ENCODE measurements at regions of chr22 and their contacts with region 1.

Region 1: DNA sequence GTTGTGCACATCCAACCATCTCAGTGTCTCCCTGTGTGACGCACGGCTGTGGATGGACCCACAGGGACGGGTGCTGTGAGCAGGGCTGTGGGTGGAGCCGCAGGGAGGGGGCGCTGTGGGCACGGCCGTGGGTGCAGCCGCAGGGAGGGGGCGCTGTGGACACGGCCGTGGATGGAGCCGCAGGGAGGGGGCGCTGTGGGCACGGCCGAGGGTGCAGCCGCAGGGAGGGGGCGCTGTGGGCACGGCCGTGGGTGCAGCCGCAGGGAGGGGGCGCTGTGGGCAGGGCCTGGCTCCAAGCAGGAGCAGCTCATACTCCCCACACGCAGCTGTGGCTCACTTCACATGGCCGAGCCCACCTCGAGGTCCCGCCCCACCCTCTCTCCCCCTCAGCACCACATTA is 6.0 kb upstream of the MAPK11 start:
- DNase-seq: peak in 7 of 14 experiments; percentile 11 to 84 (median 58)
- ATAC-seq: peak; percentile 73
- H3K4me3 ChIP-seq: no peak overlapping the region
- H3K4me3 Mint-ChIP-seq: no peak overlapping the region
- H3K27ac ChIP-seq: no peak overlapping the region
- H3K27ac Mint-ChIP-seq: no peak overlapping the region
- H3K4me1 ChIP-seq: peaks cover 15% of the 10 kb centered on the region
- H3K4me1 Mint-ChIP-seq: peaks cover 7% of the 10 kb centered on the region
- H3K27me3 ChIP-seq: no peaks in the 10 kb centered on the region
- H3K27me3 Mint-ChIP-seq: no peaks in the 10 kb centered on the region
- CTCF ChIP-seq: no peak

Region 2: DNA sequence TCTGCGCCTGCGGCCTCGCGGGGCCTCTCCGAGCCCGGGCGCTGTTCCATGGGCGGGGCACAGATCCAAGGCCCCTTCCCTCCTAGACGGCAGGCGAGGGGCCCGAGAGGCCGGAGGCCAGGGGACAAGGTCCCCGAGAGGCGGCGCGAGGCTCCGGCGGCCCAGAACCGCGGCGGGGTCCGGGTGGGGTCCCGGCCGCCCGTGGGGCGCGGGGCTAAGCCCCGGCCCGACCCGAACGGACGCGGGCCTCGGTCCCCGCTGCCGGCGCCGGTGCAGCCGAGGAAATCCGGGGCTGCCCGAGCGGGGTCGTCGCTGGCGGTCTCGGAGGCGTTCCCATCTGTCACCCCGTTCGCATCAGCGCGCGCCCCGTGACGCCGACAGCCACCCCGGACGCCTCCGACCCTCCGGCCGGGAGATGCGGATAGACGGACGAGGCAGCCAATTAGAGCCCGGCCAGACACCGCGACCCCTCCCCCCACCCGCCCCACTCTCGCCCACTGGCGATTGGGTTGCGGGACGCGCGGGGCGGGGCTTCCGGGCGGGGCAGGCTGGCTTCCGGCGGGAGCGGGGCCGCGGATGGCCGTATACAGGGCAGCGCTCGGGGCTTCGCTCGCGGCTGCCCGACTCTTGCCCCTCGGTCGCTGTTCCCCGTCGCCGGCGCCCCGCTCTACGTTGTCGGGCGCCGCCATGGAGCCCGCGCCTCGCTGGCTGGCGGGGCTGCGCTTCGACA is 75.5 kb before region 1 on chr22 and contains the start of gene SELENOO:
- CTCF ChIA-PET with region 1: no interaction called
- POLR2A ChIA-PET with region 1: no interaction called
- intact Hi-C with region 1: no loop called
- DNase-seq: peak; percentile 76 to 96 (median 90)
- ATAC-seq: peak; percentile 80
- H3K4me3 ChIP-seq: peak within 1 kb of the TSS; percentile 60
- H3K4me3 Mint-ChIP-seq: peak within 1 kb of the TSS; percentile 91
- H3K27ac ChIP-seq: peak within 1 kb of the TSS in 1 of 2 donors; percentile 40
- H3K27ac Mint-ChIP-seq: peak within 1 kb of the TSS; percentile 85
- H3K4me1 ChIP-seq: peaks cover 27% of the 10 kb centered on the region
- H3K4me1 Mint-ChIP-seq: peaks cover 27% of the 10 kb centered on the region
- H3K27me3 ChIP-seq: no peaks in the 10 kb centered on the region
- H3K27me3 Mint-ChIP-seq: no peaks in the 10 kb centered on the region
- CTCF ChIP-seq: no peak
- total RNA-seq, gene SELENOO: 26.0 to 26.1 TPM

Region 3: DNA sequence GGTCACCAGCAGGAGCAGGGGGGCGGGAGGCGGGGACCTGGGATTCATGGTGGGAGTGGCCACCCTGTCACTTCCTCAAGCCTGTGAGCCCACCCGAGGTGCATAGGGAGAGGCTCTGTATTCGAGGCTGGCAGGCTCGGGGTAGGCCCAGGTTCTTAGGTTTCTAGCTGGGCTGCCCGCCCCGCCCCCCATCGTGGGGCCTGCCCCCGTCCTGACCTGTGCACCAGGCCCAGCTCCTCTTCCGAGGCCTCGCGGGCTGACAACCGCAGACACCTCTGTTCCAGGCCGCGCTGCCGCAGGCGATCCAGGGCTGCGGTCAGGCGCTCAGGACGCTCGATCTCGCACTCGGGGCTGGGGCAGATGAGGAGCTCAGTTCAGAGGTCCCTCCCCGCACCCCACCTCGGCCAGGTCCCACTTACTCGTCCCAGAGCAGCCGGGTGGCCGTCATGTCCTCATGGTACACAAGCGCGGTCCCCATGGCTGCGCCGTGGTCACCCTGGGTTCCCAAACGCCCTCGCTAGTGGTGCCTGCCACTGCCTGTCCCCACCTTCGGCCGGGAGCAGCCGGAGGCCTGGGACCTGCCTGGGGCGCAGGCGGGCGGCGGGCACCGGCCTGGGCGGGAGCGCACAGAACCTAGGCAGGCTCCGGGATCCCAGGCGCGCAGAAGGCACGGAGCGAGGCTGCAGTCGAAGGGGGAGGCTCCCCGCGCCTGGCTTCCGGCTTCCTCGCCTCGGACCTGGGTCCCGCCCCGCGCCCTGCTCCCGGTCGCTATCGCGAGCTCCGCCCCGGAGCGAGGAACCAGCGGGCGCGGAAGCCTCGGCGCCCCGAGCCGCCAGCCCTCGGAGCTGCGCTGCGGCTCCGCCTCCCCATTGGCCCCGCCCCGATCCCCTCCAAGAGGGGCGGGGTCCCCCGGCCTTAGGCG is 25.3 kb before region 1 on chr22 and contains the start of gene HDAC10:
- CTCF ChIA-PET with region 1: interaction called, 3 read pairs
- POLR2A ChIA-PET with region 1: no interaction called
- intact Hi-C with region 1: loop called in 1 of 2 experiments (anchors 2 kb)
- DNase-seq: peak; percentile 60 to 91 (median 77)
- ATAC-seq: peak; percentile 79
- H3K4me3 ChIP-seq: peak within 1 kb of the TSS; percentile 87
- H3K4me3 Mint-ChIP-seq: peak within 1 kb of the TSS; percentile 84
- H3K27ac ChIP-seq: peak within 1 kb of the TSS in 1 of 2 donors; percentile 53
- H3K27ac Mint-ChIP-seq: peak within 1 kb of the TSS; percentile 55
- H3K4me1 ChIP-seq: peaks cover 57% of the 10 kb centered on the region
- H3K4me1 Mint-ChIP-seq: peaks cover 26% of the 10 kb centered on the region
- H3K27me3 ChIP-seq: no peaks in the 10 kb centered on the region
- H3K27me3 Mint-ChIP-seq: no peaks in the 10 kb centered on the region
- CTCF ChIP-seq: no peak
- total RNA-seq, gene HDAC10: 87.3 to 88.7 TPM

Region 4: GRCh38 chr22:50326959-50327710 is 51.0 kb after region 1 on chr22 and contains the start of gene DENND6B:
- CTCF ChIA-PET with region 1: interaction called, 9 read pairs
- POLR2A ChIA-PET with region 1: no interaction called
- intact Hi-C with region 1: loop called (anchors 1 to 5 kb)
- DNase-seq: peak; percentile 38 to 90 (median 62)
- ATAC-seq: peak; percentile 94
- H3K4me3 ChIP-seq: peak within 1 kb of the TSS; percentile 60
- H3K4me3 Mint-ChIP-seq: peak within 1 kb of the TSS; percentile 89
- H3K27ac ChIP-seq: no peak within 1 kb of the TSS
- H3K27ac Mint-ChIP-seq: peak within 1 kb of the TSS; percentile 35
- H3K4me1 ChIP-seq: peaks cover 15% of the 10 kb centered on the region
- H3K4me1 Mint-ChIP-seq: peaks cover 12% of the 10 kb centered on the region
- H3K27me3 ChIP-seq: no peaks in the 10 kb centered on the region
- H3K27me3 Mint-ChIP-seq: no peaks in the 10 kb centered on the region
- CTCF ChIP-seq: peak; percentile 30
- total RNA-seq, gene DENND6B: 1.8 to 1.9 TPM

Region 5: GRCh38 chr22:50341977-50342650 is 66.0 kb after region 1 on chr22:
- CTCF ChIA-PET with region 1: interaction called, 14 read pairs
- POLR2A ChIA-PET with region 1: interaction called, 5 read pairs
- intact Hi-C with region 1: loop called (anchors 1 to 2 kb)
- DNase-seq: peak; percentile 80 to 94 (median 87)
- ATAC-seq: peak; percentile 53
- H3K4me3 ChIP-seq: peak overlapping the region; percentile 62
- H3K4me3 Mint-ChIP-seq: peak overlapping the region; percentile 88
- H3K27ac ChIP-seq: peak overlapping the region; percentile 84 to 85
- H3K27ac Mint-ChIP-seq: peak overlapping the region; percentile 98
- H3K4me1 ChIP-seq: peaks cover 27% of the 10 kb centered on the region
- H3K4me1 Mint-ChIP-seq: peaks cover 7% of the 10 kb centered on the region
- H3K27me3 ChIP-seq: no peaks in the 10 kb centered on the region
- H3K27me3 Mint-ChIP-seq: no peaks in the 10 kb centered on the region
- CTCF ChIP-seq: peak; percentile 95

Region 6: GRCh38 chr22:50612528-50613221 is 336.5 kb after region 1 on chr22:
- CTCF ChIA-PET with region 1: interaction called, 3 read pairs
- POLR2A ChIA-PET with region 1: no interaction called
- intact Hi-C with region 1: loop called in 1 of 2 experiments (anchors 10 kb)
- DNase-seq: peak in 2 of 14 experiments; percentile 22 to 24
- ATAC-seq: peak; percentile 32
- H3K4me3 ChIP-seq: no peak overlapping the region
- H3K4me3 Mint-ChIP-seq: no peak overlapping the region
- H3K27ac ChIP-seq: no peak overlapping the region
- H3K27ac Mint-ChIP-seq: no peak overlapping the region
- H3K4me1 ChIP-seq: peaks cover 4% of the 10 kb centered on the region
- H3K4me1 Mint-ChIP-seq: no peaks in the 10 kb centered on the region
- H3K27me3 ChIP-seq: peaks cover 0 to 5% of the 10 kb centered on the region in 2 experiments
- H3K27me3 Mint-ChIP-seq: peaks cover 26% of the 10 kb centered on the region
- CTCF ChIP-seq: no peak

Measured in CD4-positive, alpha-beta T cell (primary cell).